ENCODE measurements at regions of chr16 and their contacts with region 1.

Region 1: GRCh38 chr16:31458844-31459721 is at the start of gene ARMC5:
- DNase-seq: peak; percentile 90
- H3K4me3 ChIP-seq: peak within 1 kb of the TSS; percentile 64
- CTCF ChIP-seq: peak; percentile 79

Region 2: GRCh38 chr16:31367853-31368252 is 91.2 kb before region 1 on chr16:
- CTCF ChIA-PET with region 1: no interaction called
- POLR2A ChIA-PET with region 1: no interaction called
- DNase-seq: no peak
- H3K4me3 ChIP-seq: no peak overlapping the region
- CTCF ChIP-seq: no peak

Region 3: DNA sequence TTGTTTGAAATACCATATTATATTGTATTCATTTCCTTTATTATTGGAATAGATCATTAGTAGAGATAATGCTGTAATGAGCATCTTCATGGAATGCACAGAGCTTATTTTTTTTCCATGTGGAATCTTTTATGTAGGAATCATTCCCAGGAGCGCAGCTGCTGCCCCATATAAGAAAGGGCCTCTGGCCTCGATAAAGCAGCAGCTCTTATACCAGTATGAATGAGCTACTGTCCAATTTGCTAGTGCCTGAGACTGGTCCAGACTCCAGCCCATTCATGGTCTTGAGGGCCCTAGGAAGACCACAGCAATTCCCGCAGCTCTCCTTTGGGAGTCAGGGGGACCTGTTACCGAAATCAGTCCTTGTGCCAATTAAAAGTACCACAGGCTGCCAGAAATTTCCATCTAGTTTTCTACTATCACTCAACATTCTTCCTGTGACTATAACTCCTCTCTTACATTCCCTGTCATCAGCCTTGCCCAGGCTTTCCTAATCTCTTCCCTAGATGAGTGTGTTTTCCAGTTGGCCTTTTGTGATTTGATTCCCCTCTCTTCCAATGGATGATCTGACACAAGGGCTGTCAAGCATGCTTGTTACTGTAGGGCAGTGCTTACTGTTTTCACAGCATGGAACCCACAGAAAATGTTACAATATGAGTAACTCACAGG is 18.4 kb before region 1 on chr16:
- CTCF ChIA-PET with region 1: interaction called, 134 read pairs
- POLR2A ChIA-PET with region 1: interaction called, 3 read pairs
- DNase-seq: no peak
- H3K4me3 ChIP-seq: no peak overlapping the region
- CTCF ChIP-seq: no peak

Region 4: DNA sequence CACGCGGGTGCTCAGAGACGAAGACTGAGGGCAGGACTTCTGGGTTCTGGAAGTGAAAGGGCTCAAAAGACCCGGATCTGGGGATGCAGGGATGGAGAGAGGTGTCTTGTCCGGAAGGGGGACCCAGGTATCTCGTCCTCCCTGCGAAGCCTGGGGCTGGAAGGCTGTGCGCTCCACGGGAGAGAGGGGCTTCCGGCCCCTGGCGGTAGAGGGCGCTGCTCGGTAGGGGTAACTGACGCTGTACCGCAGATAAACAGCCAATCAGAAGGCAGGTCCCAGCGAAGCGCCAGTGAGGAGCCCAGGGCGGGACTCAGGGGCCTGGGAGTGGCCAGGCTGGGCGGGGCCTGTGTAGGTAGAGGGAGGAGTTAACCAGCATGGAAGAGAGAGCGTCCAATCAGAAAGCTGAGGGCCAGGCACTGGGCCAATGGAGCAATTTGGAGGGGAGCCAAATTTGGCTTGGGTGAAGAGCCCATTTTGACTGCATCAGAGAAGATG is 13.7 kb after region 1 on chr16:
- CTCF ChIA-PET with region 1: interaction called, 86 read pairs
- POLR2A ChIA-PET with region 1: interaction called, 12 read pairs
- DNase-seq: peak; percentile 46
- H3K4me3 ChIP-seq: peak overlapping the region; percentile 89
- CTCF ChIP-seq: peak; percentile 65

Region 5: DNA sequence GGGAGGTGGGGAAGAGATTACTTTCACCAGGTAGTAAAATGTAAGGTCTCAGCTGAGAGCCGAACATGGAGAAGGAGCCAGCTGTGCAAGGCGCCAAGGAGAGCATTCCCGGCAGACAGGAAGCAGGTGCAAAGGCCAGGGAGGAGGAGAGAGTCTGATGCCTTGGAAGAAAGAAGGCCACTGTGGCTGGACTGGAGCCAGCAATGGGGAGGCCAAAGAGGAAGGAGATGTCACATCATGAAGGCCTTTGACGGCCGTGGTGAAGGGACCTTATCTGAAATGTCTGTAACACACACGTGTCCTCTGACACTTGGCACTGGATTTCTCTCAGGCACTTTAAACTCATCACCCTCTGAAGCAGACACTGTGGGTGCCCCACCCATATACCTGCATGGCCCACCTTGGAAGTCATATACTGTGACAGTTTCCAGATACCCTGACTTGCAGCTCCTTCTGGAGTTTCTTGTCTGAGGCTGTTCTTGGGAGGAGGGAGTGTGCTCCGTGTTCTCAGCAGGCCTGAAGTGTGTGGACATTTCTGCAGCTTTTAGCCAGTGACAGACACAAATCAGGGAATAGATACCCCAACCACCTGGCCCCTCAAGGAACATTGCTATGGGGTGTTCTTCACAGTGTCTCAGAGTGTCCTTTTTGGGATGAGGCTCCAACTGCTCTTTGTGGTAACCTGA is 21.9 kb after region 1 on chr16:
- CTCF ChIA-PET with region 1: interaction called, 12 read pairs
- POLR2A ChIA-PET with region 1: interaction called, 10 read pairs
- DNase-seq: no peak
- H3K4me3 ChIP-seq: no peak overlapping the region
- CTCF ChIP-seq: no peak

Region 6: GRCh38 chr16:31487720-31488467 is 28.8 kb after region 1 on chr16:
- CTCF ChIA-PET with region 1: interaction called, 10 read pairs
- POLR2A ChIA-PET with region 1: interaction called, 10 read pairs
- DNase-seq: no peak
- H3K4me3 ChIP-seq: peak overlapping the region; percentile 55
- CTCF ChIP-seq: no peak

Region 7: DNA sequence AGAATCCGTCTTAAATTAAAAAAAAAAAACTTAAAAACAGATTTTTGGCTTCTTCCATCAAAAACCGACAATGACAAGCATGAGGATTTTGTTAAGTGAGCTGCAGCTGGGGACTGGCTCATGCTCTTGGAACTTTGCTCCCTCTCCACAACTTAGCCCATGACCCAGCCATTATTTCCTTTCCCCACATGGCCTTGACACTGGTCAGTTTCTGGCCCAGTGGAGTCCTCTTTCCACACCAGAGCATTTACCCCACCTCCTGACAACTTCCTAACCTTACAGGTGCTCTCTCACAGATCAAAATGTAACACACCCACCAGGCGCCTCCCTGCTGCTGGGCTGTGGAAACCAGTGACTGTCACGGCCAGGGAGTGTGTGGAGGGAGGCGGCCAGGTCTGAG is 351.8 kb after region 1 on chr16:
- CTCF ChIA-PET with region 1: no interaction called
- POLR2A ChIA-PET with region 1: no interaction called
- DNase-seq: no peak
- H3K4me3 ChIP-seq: no peak overlapping the region
- CTCF ChIP-seq: no peak

Region 8: DNA sequence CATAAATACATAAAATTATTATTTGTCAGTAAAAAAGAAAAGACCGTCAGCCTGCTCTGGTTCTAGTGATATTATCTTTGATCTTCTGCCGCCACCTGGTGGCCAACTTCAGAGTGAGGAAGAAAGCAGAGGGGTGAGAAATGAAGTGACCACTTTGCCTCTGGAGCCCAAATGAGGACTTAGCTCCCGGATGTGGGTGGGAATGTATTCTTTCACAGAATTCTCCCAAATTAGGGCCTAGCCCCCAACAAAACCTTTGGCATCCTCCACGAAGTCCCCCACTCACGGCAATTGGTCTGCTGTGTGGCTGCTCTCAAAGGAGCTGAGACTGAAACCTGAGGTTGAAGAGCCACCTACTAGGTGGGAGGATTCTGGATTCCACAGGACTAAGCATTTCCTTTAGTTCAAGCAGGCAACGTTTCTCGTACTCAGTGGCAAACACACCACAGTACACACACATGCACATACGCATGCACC is 409.6 kb after region 1 on chr16:
- CTCF ChIA-PET with region 1: interaction called, 10 read pairs
- POLR2A ChIA-PET with region 1: no interaction called
- DNase-seq: no peak
- H3K4me3 ChIP-seq: no peak overlapping the region
- CTCF ChIP-seq: peak; percentile 66

Measured in AG04449 (cell line).